ENCODE measurements at regions of chr13 and their contacts with region 1.

Region 1: GRCh38 chr13:106536244-106537034 is 977 bp upstream of the EFNB2 start:
- DNase-seq: peak; percentile 63
- ATAC-seq: peak; percentile 41
- H3K4me3 ChIP-seq: peak overlapping the region; percentile 43 to 90
- H3K27ac ChIP-seq: peak overlapping the region; percentile 43; the same call in 1 of the 2 replicates
- H3K4me1 ChIP-seq: peaks cover 8 to 24% of the 10 kb centered on the region in 2 experiments
- H3K27me3 ChIP-seq: no peaks in the 10 kb centered on the region
- CTCF ChIP-seq: peak; percentile 63 to 96 (median 93); a peak in 5 of 6 replicates
- POLR2A ChIP-seq: no peak
- RAD21 ChIP-seq: peak; percentile 89

Region 2: DNA sequence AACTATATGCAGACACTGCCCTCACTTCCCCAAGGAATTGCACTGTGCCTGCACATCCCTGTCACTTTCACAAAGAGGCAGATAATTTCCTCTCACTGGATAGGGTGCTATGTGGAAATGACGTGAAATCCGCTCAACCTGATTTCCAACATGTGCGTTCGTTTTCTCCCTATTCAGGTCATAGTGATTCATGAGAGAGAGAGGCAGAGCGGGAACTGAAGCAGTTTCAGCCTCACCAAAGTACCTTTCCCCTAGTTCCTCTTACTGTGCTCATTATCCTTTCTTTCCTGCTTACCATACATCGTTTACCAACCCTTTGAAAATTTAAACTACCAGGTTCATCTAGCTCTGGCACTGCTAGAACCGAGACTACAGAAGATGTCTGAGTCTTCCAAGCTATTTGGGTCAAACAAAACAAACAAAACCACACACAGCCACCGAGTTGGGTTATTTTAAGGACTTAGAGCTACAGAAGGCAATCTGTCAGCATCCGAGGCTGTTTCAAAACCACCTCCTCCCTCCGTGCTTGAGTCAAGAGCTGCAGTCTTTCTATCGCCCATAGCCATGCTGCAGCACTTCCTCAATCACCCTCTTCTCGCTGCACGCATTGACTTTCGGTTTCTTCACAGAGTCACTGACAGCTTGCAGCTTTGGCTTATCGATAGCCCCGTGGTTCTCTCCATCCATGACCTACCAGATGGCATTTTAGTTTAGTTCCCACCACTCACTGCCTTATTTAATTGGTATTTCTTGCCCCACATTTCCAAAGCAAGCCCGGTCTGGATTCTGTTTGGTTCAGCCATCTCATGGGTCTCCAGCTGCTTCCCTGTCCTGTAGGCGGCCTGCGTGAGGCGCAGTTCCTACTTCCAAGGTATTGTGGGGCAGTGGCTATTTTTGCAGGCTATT is 1396.8 kb before region 1 on chr13:
- CTCF ChIA-PET with region 1: no interaction called
- POLR2A ChIA-PET with region 1: no interaction called
- RAD21 ChIA-PET with region 1: no interaction called
- intact Hi-C with region 1: loop called (anchors 5 kb)
- DNase-seq: peak; percentile 44
- ATAC-seq: peak; percentile 91
- H3K4me3 ChIP-seq: peak overlapping the region; percentile 58 to 66
- H3K27ac ChIP-seq: peak overlapping the region; percentile 41
- H3K4me1 ChIP-seq: peaks cover 0 to 14% of the 10 kb centered on the region in 2 experiments; a peak in 2 of 4 replicates
- H3K27me3 ChIP-seq: no peaks in the 10 kb centered on the region
- CTCF ChIP-seq: peak; percentile 16 to 70 (median 68); a peak in 4 of 6 replicates
- POLR2A ChIP-seq: no peak
- RAD21 ChIP-seq: peak; percentile 41

Region 3: GRCh38 chr13:105518086-105518485 is 1018.4 kb before region 1 on chr13:
- CTCF ChIA-PET with region 1: no interaction called
- POLR2A ChIA-PET with region 1: no interaction called
- RAD21 ChIA-PET with region 1: no interaction called
- intact Hi-C with region 1: loop called (anchors 10 kb)
- DNase-seq: no peak
- ATAC-seq: no peak
- H3K4me3 ChIP-seq: no peak overlapping the region
- H3K27ac ChIP-seq: no peak overlapping the region
- H3K4me1 ChIP-seq: no peaks in the 10 kb centered on the region
- H3K27me3 ChIP-seq: no peaks in the 10 kb centered on the region
- CTCF ChIP-seq: no peak
- POLR2A ChIP-seq: no peak
- RAD21 ChIP-seq: no peak

Region 4: GRCh38 chr13:106038752-106039151 is 497.7 kb before region 1 on chr13:
- CTCF ChIA-PET with region 1: interaction called, 3 read pairs
- POLR2A ChIA-PET with region 1: no interaction called
- RAD21 ChIA-PET with region 1: no interaction called
- intact Hi-C with region 1: loop called (anchors 5 kb)
- DNase-seq: peak; percentile 51
- ATAC-seq: peak; percentile 77
- H3K4me3 ChIP-seq: no peak overlapping the region
- H3K27ac ChIP-seq: peak overlapping the region; percentile 7
- H3K4me1 ChIP-seq: peaks cover 14 to 40% of the 10 kb centered on the region in 2 experiments; a peak in 3 of 4 replicates
- H3K27me3 ChIP-seq: no peaks in the 10 kb centered on the region
- CTCF ChIP-seq: no peak
- POLR2A ChIP-seq: no peak
- RAD21 ChIP-seq: 0 out of 2 replicates have a peak, but pooled peaks have one; percentile 6

Region 5: DNA sequence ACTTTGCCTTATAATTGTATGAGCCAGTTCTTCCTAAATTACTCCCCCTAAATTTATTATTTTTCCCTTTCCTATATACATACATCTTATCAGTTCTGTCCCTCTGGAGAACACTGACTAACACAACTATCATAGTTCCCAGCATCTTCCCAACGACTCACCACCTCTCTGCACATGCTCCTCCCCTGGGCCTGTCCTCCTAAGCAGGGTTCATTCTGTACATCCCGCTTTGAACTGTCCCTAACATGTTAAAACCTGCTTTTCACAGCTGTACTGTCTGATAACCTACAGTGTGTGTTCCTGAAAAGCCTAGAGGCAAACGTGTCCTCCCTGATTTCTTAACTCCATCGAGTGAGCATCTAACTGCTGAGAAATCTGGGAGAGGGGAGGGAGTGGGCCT is 142.7 kb before region 1 on chr13:
- CTCF ChIA-PET with region 1: no interaction called
- POLR2A ChIA-PET with region 1: no interaction called
- RAD21 ChIA-PET with region 1: no interaction called
- intact Hi-C with region 1: no loop called
- DNase-seq: no peak
- ATAC-seq: no peak
- H3K4me3 ChIP-seq: no peak overlapping the region
- H3K27ac ChIP-seq: no peak overlapping the region
- H3K4me1 ChIP-seq: peaks cover 0 to 5% of the 10 kb centered on the region in 2 experiments; a peak in 2 of 4 replicates
- H3K27me3 ChIP-seq: no peaks in the 10 kb centered on the region
- CTCF ChIP-seq: no peak
- POLR2A ChIP-seq: no peak
- RAD21 ChIP-seq: no peak

Region 6: GRCh38 chr13:106619688-106620555 is 83.5 kb after region 1 on chr13:
- CTCF ChIA-PET with region 1: interaction called, 17 read pairs
- POLR2A ChIA-PET with region 1: no interaction called
- RAD21 ChIA-PET with region 1: interaction called in 1 of 2 experiments, 3 read pairs
- intact Hi-C with region 1: no loop called
- DNase-seq: peak; percentile 44
- ATAC-seq: peak; percentile 98
- H3K4me3 ChIP-seq: no peak overlapping the region
- H3K27ac ChIP-seq: no peak overlapping the region
- H3K4me1 ChIP-seq: peaks cover 0 to 4% of the 10 kb centered on the region in 2 experiments; a peak in 1 of 4 replicates
- H3K27me3 ChIP-seq: peaks cover 45% of the 10 kb centered on the region
- CTCF ChIP-seq: peak; percentile 43 to 88 (median 71); a peak in 5 of 6 replicates
- POLR2A ChIP-seq: no peak
- RAD21 ChIP-seq: peak; percentile 67

Measured in HCT116 (cell line).